ENCODE measurements at regions of chr1 and their contacts with region 1.

Region 1: GRCh38 chr1:204714861-204715511 is 29.4 kb upstream of the LRRN2 start:
- DNase-seq: peak; percentile 51
- ATAC-seq: peak; percentile 77
- H3K4me3 ChIP-seq: peak overlapping the region; percentile 26
- H3K27ac ChIP-seq: peak overlapping the region; percentile 45; the same call in 1 of the 2 replicates
- H3K4me1 ChIP-seq: peaks cover 10% of the 10 kb centered on the region
- H3K27me3 ChIP-seq: no peaks in the 10 kb centered on the region
- CTCF ChIP-seq: peak in 2 of 3 experiments; percentile 18 to 32; a peak in 1 of 6 replicates
- EP300 ChIP-seq: peak; percentile 18 to 40; a peak in 2 of 4 replicates
- POLR2A ChIP-seq: no peak
- RAD21 ChIP-seq: no peak

Region 2: GRCh38 chr1:204685236-204686006 is 29.6 kb before region 1 on chr1 and contains the start of gene LRRN2:
- CTCF ChIA-PET with region 1: no interaction called
- POLR2A ChIA-PET with region 1: no interaction called
- RAD21 ChIA-PET with region 1: no interaction called
- SMC1A ChIA-PET with region 1: no interaction called
- in situ Hi-C with region 1: no loop called
- intact Hi-C with region 1: no loop called
- DNase-seq: no peak
- ATAC-seq: no peak
- H3K4me3 ChIP-seq: no peak within 1 kb of the TSS
- H3K27ac ChIP-seq: no peak within 1 kb of the TSS
- H3K4me1 ChIP-seq: no peaks in the 10 kb centered on the region
- H3K27me3 ChIP-seq: peaks cover 14 to 17% of the 10 kb centered on the region in 2 experiments
- CTCF ChIP-seq: no peak
- EP300 ChIP-seq: no peak
- POLR2A ChIP-seq: no peak
- RAD21 ChIP-seq: no peak
- polyA plus RNA-seq, gene LRRN2: not detected

Region 3: DNA sequence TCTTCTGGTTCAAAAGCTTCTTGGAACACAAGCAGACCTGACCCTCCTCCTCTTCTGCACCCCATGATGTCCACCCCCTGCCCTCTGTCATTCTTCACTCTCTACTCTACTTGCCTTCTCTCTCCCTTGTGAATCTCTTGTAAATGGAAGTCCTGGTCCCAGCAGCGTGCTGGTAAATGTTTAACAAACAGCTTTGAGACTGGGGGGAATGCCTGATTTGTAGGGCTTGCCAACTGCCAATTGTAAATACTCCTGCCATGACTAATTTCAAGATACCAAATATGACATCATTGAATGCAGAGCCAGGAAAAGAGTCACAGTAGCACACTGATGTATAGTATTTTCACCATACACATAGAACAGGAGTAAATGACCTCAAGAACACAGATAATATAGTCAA is 11.5 kb after region 1 on chr1:
- CTCF ChIA-PET with region 1: interaction called, 12 read pairs
- POLR2A ChIA-PET with region 1: interaction called, 9 read pairs
- RAD21 ChIA-PET with region 1: interaction called, 7 read pairs
- SMC1A ChIA-PET with region 1: interaction called, 31 read pairs
- in situ Hi-C with region 1: no loop called
- intact Hi-C with region 1: no loop called
- DNase-seq: no peak
- ATAC-seq: peak; percentile 74
- H3K4me3 ChIP-seq: no peak overlapping the region
- H3K27ac ChIP-seq: no peak overlapping the region
- H3K4me1 ChIP-seq: no peaks in the 10 kb centered on the region
- H3K27me3 ChIP-seq: no peaks in the 10 kb centered on the region; a peak in 1 of 4 replicates
- CTCF ChIP-seq: no peak
- EP300 ChIP-seq: no peak
- POLR2A ChIP-seq: no peak
- RAD21 ChIP-seq: no peak

Region 4: GRCh38 chr1:205061227-205061626 is 346.2 kb after region 1 on chr1:
- CTCF ChIA-PET with region 1: no interaction called
- POLR2A ChIA-PET with region 1: no interaction called
- RAD21 ChIA-PET with region 1: no interaction called
- SMC1A ChIA-PET with region 1: no interaction called
- in situ Hi-C with region 1: no loop called
- intact Hi-C with region 1: no loop called
- DNase-seq: no peak
- ATAC-seq: no peak; the same call in 2 of the 3 replicates
- H3K4me3 ChIP-seq: no peak overlapping the region
- H3K27ac ChIP-seq: no peak overlapping the region
- H3K4me1 ChIP-seq: no peaks in the 10 kb centered on the region
- H3K27me3 ChIP-seq: no peaks in the 10 kb centered on the region
- CTCF ChIP-seq: no peak
- EP300 ChIP-seq: no peak
- POLR2A ChIP-seq: no peak
- RAD21 ChIP-seq: no peak